ENCODE measurements at regions of chr15 and their contacts with region 1.

Region 1: GRCh38 chr15:62087671-62088352 is 21.0 kb downstream of the C2CD4A start:
- DNase-seq: no peak
- H3K4me3 ChIP-seq: no peak overlapping the region
- CTCF ChIP-seq: no peak

Region 2: GRCh38 chr15:62068071-62068786 is 19.6 kb before region 1 on chr15:
- CTCF ChIA-PET with region 1: interaction called, 41 read pairs
- POLR2A ChIA-PET with region 1: no interaction called
- DNase-seq: no peak
- H3K4me3 ChIP-seq: peak overlapping the region; percentile 53
- CTCF ChIP-seq: peak; percentile 20

Region 3: DNA sequence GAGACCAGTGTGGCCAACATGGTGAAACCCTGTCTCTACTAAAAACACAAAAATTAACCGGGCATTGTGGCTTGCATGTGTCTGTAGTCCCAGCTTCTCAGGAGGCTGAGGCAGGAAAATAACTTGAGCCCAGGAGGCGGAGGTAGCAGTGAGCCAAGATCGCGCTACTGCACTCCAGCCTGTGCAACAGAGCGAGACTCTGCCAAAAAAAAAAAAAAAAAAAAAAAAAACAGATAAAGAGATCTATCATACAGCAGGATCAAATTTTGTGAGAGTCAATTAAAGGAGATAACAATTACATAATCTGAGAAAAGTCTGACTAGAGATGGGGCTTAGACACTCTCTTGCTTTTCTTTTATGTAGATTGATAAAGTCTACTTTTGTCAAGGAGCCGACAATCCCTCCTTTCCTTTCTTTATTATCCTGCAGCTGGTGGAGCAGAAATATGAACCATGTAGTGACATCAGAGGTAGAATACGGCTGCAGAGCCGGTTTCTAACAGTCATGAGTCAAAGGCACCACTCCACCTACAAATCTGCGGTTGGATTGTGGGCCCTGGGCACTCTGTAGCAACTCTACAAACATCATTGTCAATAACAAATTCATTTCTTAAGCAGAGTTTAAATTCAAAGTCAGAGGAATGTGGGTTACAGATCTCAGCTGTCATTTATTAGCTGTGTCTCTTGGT is 12.1 kb before region 1 on chr15:
- CTCF ChIA-PET with region 1: interaction called, 41 read pairs
- POLR2A ChIA-PET with region 1: no interaction called
- DNase-seq: no peak
- H3K4me3 ChIP-seq: no peak overlapping the region
- CTCF ChIP-seq: no peak